HCT116 (cell line): ENCODE measurements at regions of chr3 and their contacts with region 1.

Region 1: DNA sequence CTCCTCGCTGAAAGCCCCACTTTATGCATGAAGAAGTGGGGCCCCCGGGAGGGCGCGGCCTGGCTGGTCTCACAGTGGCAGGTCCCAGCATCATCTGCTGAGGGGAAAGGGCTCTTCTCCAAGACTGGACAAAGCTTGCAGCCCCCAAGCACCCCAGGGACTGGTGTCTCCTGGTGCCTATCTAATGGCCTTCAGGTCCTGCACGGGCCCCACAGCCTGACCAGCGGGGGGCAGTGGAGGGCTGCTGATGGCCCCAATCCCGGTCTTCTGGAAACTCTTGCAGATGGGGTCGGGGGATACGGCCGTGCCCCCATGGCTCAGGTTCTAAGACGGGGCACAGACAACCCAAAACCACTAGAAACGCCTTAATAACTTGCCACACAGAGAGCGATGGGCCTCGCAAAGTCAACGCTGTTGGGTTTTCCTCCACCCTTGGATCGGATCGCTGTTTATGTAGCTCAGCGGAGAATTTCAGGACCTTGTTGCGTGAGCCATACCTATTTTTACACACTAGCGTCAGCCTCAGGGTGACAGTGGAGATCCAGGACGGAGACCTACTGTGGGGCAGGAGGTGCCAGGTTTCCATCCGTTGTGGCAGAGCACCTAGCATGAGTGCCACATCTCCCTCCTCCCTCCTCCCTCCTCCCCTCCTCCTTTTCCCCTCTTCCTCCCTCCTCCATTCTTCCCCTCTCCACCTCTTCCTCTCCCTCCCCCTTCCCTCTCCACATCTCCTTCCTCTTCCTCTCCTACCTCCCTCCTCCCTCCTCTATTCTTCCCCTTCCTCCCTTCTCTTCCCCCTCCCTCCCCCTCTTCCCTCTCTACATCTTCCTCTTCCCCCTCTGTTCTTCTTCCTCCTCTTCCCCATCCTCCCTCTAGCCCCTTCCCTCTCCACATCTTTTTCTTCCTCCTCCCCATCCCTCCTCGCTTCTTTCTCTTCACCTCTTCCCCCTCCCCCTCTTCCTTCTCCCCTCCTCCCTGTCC is 79.3 kb upstream of the ALDH1L1 start:
- DNase-seq: no peak
- ATAC-seq: peak; percentile 77
- H3K4me3 ChIP-seq: no peak overlapping the region
- H3K27ac ChIP-seq: no peak overlapping the region
- H3K4me1 ChIP-seq: peaks cover 13 to 33% of the 10 kb centered on the region in 2 experiments; a peak in 3 of 4 replicates
- H3K27me3 ChIP-seq: no peaks in the 10 kb centered on the region
- CTCF ChIP-seq: peak; percentile 70 to 79 (median 78); a peak in 5 of 6 replicates
- POLR2A ChIP-seq: no peak
- RAD21 ChIP-seq: peak; percentile 83

Region 2: DNA sequence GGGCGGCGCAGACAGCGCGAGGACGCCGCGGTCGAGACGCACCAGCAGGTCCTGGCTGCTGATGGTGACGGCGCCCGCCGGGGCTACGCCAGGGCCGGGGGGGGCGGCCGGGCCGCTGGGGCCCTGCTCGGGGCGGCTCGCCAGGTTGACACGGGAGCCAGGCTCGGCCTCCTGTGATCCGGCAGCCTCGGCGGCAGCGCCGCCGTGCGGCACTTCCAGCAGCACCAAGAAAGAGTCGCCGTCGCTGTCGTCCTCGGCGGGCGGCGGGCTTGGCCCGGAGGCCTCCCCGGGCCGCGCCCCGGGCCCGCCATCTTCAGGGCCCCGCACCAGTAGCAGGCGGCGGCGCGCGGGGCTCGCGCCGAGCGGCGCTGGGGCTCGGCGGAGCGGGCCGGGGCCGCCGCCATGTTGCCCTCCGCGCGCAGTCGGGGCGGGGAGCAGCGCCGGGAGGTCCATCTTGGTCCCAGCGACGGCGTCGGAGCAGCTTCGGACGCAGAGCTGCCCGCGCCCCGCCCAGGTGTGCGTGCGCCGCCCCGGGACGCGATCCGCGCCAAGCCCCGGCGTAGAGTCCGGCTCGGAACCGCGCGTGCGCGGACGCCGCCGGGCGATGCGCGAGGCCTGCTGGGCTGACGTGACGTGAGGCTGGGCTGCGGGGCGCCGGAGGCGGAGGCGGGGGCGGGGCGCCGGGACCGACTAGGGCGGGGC is 215.9 kb after region 1 on chr3 and contains the start of gene ZXDC:
- CTCF ChIA-PET with region 1: no interaction called
- POLR2A ChIA-PET with region 1: no interaction called
- RAD21 ChIA-PET with region 1: no interaction called
- intact Hi-C with region 1: loop called (anchors 10 kb)
- DNase-seq: peak; percentile 85
- ATAC-seq: peak; percentile 86
- H3K4me3 ChIP-seq: peak within 1 kb of the TSS; percentile 69 to 80
- H3K27ac ChIP-seq: peak within 1 kb of the TSS; percentile 92
- H3K4me1 ChIP-seq: peaks cover 12 to 35% of the 10 kb centered on the region in 2 experiments
- H3K27me3 ChIP-seq: no peaks in the 10 kb centered on the region
- CTCF ChIP-seq: peak in 1 of 3 experiments; percentile 47; a peak in 2 of 6 replicates
- POLR2A ChIP-seq: peak; percentile 63
- RAD21 ChIP-seq: peak; percentile 46
- total RNA-seq, gene ZXDC: 29.9 TPM